ENCODE measurements at regions of chr22 and their contacts with region 1.

Region 1: DNA sequence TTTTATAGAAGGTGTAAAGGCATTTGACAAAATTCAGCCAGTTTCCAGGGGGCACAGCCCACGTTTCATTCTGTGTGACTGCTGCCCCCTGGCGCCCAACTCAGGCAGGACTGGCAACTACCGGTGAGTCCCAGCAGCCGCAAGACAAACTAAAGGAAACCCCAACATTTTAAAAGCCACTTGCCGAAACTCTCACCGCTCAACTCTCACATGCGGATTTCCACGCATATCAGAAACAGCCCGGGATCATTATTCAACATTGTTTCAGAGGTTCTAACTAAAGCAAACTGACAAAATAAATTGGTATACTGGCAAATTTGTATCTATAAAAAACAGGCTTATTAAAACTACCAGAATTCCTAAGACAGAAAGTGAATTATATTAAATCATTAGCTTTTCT is 48.2 kb downstream of the MORC2 start:
- DNase-seq: peak; percentile 59
- ATAC-seq: peak; percentile 90
- H3K4me3 ChIP-seq: no peak overlapping the region
- H3K27ac ChIP-seq: no peak overlapping the region
- H3K4me1 ChIP-seq: no peaks in the 10 kb centered on the region; the same call in 1 of the 2 replicates
- H3K27me3 ChIP-seq: no peaks in the 10 kb centered on the region
- CTCF ChIP-seq: peak; percentile 87
- POLR2A ChIP-seq: no peak
- RAD21 ChIP-seq: peak; percentile 86

Region 2: GRCh38 chr22:30634471-30635233 is 285.8 kb before region 1 on chr22:
- CTCF ChIA-PET with region 1: interaction called, 3 read pairs
- POLR2A ChIA-PET with region 1: no interaction called
- dilution Hi-C with region 1: no loop called
- in situ Hi-C with region 1: loop called (anchors 10 kb)
- intact Hi-C with region 1: loop called (anchors 1 kb)
- DNase-seq: peak; percentile 89
- ATAC-seq: peak; percentile 59
- H3K4me3 ChIP-seq: peak overlapping the region; percentile 20
- H3K27ac ChIP-seq: peak overlapping the region; percentile 48
- H3K4me1 ChIP-seq: peaks cover 21% of the 10 kb centered on the region
- H3K27me3 ChIP-seq: no peaks in the 10 kb centered on the region
- CTCF ChIP-seq: peak; percentile 97
- POLR2A ChIP-seq: no peak
- RAD21 ChIP-seq: peak; percentile 96

Region 3: GRCh38 chr22:30763815-30764686 is 156.4 kb before region 1 on chr22:
- CTCF ChIA-PET with region 1: interaction called, 12 read pairs
- POLR2A ChIA-PET with region 1: no interaction called
- dilution Hi-C with region 1: no loop called
- in situ Hi-C with region 1: loop called (anchors 5 kb)
- intact Hi-C with region 1: loop called (anchors 1 kb)
- DNase-seq: peak; percentile 86
- ATAC-seq: peak; percentile 84
- H3K4me3 ChIP-seq: no peak overlapping the region
- H3K27ac ChIP-seq: no peak overlapping the region
- H3K4me1 ChIP-seq: no peaks in the 10 kb centered on the region
- H3K27me3 ChIP-seq: no peaks in the 10 kb centered on the region
- CTCF ChIP-seq: peak; percentile 90
- POLR2A ChIP-seq: no peak
- RAD21 ChIP-seq: peak; percentile 96

Region 4: GRCh38 chr22:30902496-30903357 is 17.7 kb before region 1 on chr22:
- CTCF ChIA-PET with region 1: interaction called, 10 read pairs
- POLR2A ChIA-PET with region 1: no interaction called
- dilution Hi-C with region 1: no loop called
- in situ Hi-C with region 1: no loop called
- intact Hi-C with region 1: no loop called
- DNase-seq: no peak
- ATAC-seq: no peak
- H3K4me3 ChIP-seq: no peak overlapping the region
- H3K27ac ChIP-seq: no peak overlapping the region
- H3K4me1 ChIP-seq: no peaks in the 10 kb centered on the region
- H3K27me3 ChIP-seq: no peaks in the 10 kb centered on the region
- CTCF ChIP-seq: no peak
- POLR2A ChIP-seq: no peak
- RAD21 ChIP-seq: no peak

Measured in IMR-90 (cell line).